Right ventricle myocardium inferior (tissue), 1 donor: ENCODE measurements at regions of chr2 and their contacts with region 1.

Region 1: GRCh38 chr2:206981739-206982340 is 42.5 kb downstream of the CPO start:
- DNase-seq: peak; percentile 69
- ATAC-seq: peak; percentile 83

Region 2: GRCh38 chr2:207341804-207342203 is 360.0 kb after region 1 on chr2:
- intact Hi-C with region 1: loop called (anchors 5 kb)
- DNase-seq: no peak
- ATAC-seq: no peak